ENCODE measurements at regions of chr2 and their contacts with region 1.

Region 1: GRCh38 chr2:219571311-219572236 is at the start of gene OBSL1:
- DNase-seq: peak; percentile 60
- H3K4me3 Mint-ChIP-seq: peak within 1 kb of the TSS; percentile 49
- H3K27ac Mint-ChIP-seq: no peak within 1 kb of the TSS
- H3K4me1 Mint-ChIP-seq: peaks cover 7% of the 10 kb centered on the region
- H3K27me3 Mint-ChIP-seq: no peaks in the 10 kb centered on the region
- CTCF ChIP-seq: no peak
- total RNA-seq, gene OBSL1: 29.0 and 29.8 TPM in 2 replicates

Region 2: GRCh38 chr2:219543601-219544358 is 27.8 kb before region 1 on chr2 and contains the starts of genes CHPF and TMEM198:
- CTCF ChIA-PET with region 1: interaction called, 4 read pairs
- POLR2A ChIA-PET with region 1: interaction called, 14 read pairs
- intact Hi-C with region 1: no loop called
- DNase-seq: peak; percentile 98
- H3K4me3 Mint-ChIP-seq: peak within 1 kb of the TSS; percentile 75
- H3K27ac Mint-ChIP-seq: peak within 1 kb of the TSS; percentile 57
- H3K4me1 Mint-ChIP-seq: peaks cover 12% of the 10 kb centered on the region
- H3K27me3 Mint-ChIP-seq: no peaks in the 10 kb centered on the region
- CTCF ChIP-seq: no peak
- total RNA-seq, gene CHPF: 81.2 and 105 TPM in 2 replicates
- total RNA-seq, gene TMEM198: 5.3 and 6.3 TPM in 2 replicates

Region 3: DNA sequence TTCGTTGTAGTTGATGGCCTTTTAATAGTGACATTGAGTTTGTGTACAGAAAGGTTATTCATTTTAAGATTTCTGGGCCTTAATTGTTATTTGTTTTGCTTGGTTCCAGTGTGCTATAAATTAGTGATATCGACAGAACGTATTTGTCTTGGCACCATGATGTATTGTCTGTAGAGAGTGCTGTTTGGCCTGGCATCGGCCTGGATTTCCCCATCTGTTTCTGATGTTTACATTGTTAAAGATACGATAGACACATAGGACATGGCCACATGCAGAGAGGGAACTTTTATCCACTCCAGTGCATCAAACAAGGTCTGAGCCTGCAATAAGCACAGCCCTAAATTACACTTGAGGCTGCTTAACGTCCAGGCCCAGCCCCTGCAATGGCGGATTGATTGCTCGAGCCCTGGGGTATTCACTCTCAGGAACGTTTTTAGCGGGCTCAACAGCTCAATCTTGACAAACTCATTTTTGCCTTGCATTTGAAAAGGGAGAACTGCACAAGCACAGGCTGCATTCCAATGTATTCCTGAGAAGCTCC is 200.6 kb after region 1 on chr2:
- CTCF ChIA-PET with region 1: no interaction called
- POLR2A ChIA-PET with region 1: no interaction called
- intact Hi-C with region 1: no loop called
- DNase-seq: no peak
- H3K4me3 Mint-ChIP-seq: no peak overlapping the region
- H3K27ac Mint-ChIP-seq: no peak overlapping the region
- H3K4me1 Mint-ChIP-seq: no peaks in the 10 kb centered on the region
- H3K27me3 Mint-ChIP-seq: no peaks in the 10 kb centered on the region
- CTCF ChIP-seq: no peak